ENCODE measurements at regions of chr3 and their contacts with region 1.

Region 1: DNA sequence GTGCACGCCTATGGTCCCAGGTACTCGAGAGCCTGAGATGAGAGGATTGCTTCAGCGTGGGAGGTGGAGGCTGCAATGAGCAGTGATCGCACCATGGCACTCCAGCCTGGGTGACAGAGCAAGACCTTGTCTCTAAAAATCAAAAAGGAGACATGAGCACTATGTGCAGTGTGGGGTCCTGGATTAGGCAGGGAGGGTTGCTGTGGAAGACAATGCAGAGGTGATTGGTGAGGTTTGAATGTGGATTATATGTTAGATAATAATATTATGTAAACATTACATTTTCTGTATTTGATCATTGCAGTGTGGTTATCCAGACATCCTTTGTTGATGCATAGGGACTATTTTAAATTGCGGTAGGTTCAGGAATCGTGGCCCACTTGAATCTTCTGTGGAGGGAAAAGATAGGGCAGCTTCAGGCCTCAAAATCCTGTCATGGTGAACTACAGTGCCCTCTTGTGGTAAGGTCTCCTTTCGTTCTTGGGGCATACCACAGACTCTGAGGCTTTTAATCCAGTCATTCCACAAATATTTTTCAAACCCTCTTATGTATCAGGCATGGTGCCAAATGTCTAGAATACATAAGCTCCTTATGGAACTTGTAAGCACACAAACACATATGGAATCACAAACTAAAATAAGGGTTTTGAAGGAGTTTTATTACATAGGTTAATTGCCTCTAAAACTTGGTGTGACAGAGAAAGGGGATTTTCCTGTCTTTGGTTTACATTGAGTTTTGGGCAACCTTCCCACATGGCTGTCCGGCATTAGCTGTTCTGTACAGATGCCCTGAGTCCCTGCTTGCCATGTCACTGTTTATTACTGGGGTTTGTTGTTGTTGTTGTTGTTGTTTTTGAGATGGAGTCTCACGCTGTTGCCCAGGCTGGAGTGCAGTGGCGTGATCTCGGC is 37.7 kb downstream of the GPD1L start:
- ATAC-seq: peak; percentile 42 to 94 (median 60)
- H3K4me3 ChIP-seq: no peak overlapping the region
- H3K27ac ChIP-seq: no peak overlapping the region
- H3K4me1 ChIP-seq: peaks cover 8% of the 10 kb centered on the region in 2 donors

Region 2: DNA sequence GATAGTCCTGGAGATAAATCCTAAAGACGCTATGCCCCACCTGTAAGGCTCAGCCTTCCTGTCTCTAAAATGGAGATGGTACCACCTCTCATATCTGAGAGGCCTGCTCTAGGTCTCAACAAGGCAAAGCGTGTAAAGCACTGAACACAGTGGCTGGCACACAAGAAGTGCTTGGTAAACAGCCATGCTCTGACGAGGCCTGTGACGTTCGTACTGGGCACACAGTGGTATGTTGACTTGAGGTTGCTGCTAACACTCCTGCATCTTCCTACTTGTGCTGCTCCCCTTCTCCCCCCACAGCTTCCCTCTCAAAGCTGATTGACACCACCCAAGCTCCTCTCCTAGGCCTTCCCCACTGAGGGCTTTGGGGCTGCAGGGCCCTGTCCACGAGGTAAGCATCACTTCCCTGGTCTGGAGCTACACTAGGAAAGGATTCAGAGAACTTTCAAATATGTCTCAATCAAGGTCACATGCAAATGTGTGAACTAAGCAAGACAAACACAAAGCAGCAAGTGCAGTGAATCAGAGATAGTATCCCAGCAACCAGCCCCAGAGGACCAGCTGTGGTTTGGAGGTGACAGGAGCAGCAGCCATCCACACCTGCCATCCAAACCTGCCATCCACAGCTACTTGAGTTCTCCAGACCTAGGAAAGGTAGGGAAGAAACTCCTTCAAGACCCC is 433.8 kb before region 1 on chr3:
- in situ Hi-C with region 1: no loop called
- ATAC-seq: no peak
- H3K4me3 ChIP-seq: no peak overlapping the region
- H3K27ac ChIP-seq: no peak overlapping the region
- H3K4me1 ChIP-seq: peaks cover 0 to 4% of the 10 kb centered on the region in 2 donors

Region 3: GRCh38 chr3:32018757-32019564 is 125.1 kb before region 1 on chr3:
- in situ Hi-C with region 1: loop called in 2 of 9 experiments (anchors 10 to 25 kb)
- ATAC-seq: peak in 3 of 8 experiments; percentile 70 to 92 (median 86)
- H3K4me3 ChIP-seq: no peak overlapping the region
- H3K27ac ChIP-seq: no peak overlapping the region
- H3K4me1 ChIP-seq: no peaks in the 10 kb centered on the region

Measured in motor neuron (in vitro differentiated cells).